HCT116 (cell line): ENCODE measurements at regions of chr9 and their contacts with region 1.

Region 1: DNA sequence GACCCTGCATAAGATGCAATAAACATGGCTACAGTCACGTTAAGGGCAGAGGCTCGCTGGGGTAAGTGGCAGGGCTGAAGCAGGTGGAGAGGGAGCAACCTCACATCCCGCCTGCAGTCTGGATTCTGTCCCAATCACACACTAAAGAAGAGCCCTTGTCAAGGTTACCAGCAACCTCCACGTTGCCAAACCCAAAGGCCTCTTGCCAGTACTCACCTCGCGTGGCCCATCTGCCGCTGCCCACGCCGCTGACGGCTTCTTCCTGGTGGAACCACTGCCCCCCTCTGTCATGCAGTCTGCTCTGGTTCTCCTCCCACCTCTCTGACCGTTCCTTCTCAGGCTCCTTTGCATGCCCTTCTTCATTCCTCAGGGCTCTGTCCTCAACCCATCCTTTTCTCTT is 8.8 kb downstream of the AQP7 start:
- DNase-seq: no peak
- ATAC-seq: no peak
- H3K4me3 ChIP-seq: no peak overlapping the region
- H3K27ac ChIP-seq: no peak overlapping the region
- H3K4me1 ChIP-seq: peaks cover 24 to 26% of the 10 kb centered on the region in 2 experiments; a peak in 3 of 4 replicates
- H3K27me3 ChIP-seq: no peaks in the 10 kb centered on the region
- CTCF ChIP-seq: no peak
- POLR2A ChIP-seq: no peak
- RAD21 ChIP-seq: no peak

Region 2: GRCh38 chr9:33374634-33375213 is 18.9 kb before region 1 on chr9:
- CTCF ChIA-PET with region 1: interaction called, 17 read pairs
- POLR2A ChIA-PET with region 1: interaction called, 3 read pairs
- RAD21 ChIA-PET with region 1: no interaction called
- intact Hi-C with region 1: no loop called
- DNase-seq: peak; percentile 64
- ATAC-seq: peak; percentile 80
- H3K4me3 ChIP-seq: peak overlapping the region; percentile 40 to 53; a peak in 3 of 4 replicates
- H3K27ac ChIP-seq: peak overlapping the region; percentile 67; the same call in 1 of the 2 replicates
- H3K4me1 ChIP-seq: peaks cover 9 to 20% of the 10 kb centered on the region in 2 experiments
- H3K27me3 ChIP-seq: no peaks in the 10 kb centered on the region
- CTCF ChIP-seq: peak; percentile 86 to 93 (median 90)
- POLR2A ChIP-seq: no peak
- RAD21 ChIP-seq: peak; percentile 82